B cell (primary cell): ENCODE measurements at regions of chr19 and their contacts with region 1.

Region 1: DNA sequence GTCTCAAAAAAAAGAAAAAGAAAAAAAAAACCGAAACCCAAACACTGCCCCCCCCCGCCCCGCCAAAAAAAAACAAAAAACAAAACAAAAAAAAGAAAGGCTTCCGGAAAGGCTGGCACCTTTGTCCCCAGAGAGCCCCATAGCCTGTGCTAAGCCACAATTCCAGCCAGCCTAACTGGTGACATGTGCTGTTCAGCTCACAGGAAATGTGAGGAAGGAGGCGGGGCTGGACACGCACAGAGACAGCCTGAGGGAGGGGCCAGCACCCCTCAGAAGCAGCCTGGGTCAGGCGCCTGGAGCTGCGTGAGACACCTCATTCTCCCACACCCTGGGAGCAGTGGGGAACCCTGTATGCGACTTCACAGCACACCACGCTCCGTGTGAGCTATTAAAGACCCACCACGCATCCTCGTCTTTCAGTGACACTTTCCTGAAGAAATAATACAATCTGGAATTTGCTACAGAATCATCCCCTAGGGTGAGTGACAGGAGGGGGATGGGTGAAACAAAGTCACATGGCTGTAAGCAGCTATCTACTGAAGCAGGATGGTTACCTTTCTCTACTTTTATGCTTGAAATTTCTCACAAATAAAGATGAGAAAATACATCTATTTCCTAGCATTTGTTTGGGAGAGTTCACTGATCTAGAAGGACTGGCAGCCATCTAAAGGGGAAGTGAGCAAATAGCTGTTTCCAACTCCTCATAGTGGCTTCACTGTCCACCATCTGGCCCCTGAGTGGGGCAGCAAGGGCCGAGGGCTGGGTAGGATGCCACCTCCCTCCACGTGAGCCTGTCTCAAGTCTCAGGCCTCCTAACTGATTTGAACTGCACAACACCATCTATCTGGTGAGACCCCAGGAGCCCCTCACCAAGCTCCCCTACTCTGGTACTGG is 12.3 kb upstream of the SLC35E1 start:
- DNase-seq: peak; percentile 98
- ATAC-seq: peak; percentile 53
- H3K4me3 ChIP-seq: peak overlapping the region; percentile 68 to 93 (median 85)
- H3K4me3 Mint-ChIP-seq: peak overlapping the region; percentile 97
- H3K27ac ChIP-seq: peak overlapping the region; percentile 98 to 99
- H3K27ac Mint-ChIP-seq: peak overlapping the region; percentile 100
- H3K4me1 ChIP-seq: peaks cover 62 to 80% of the 10 kb centered on the region in 2 donors
- H3K4me1 Mint-ChIP-seq: peaks cover 89% of the 10 kb centered on the region
- H3K27me3 ChIP-seq: no peaks in the 10 kb centered on the region
- H3K27me3 Mint-ChIP-seq: no peaks in the 10 kb centered on the region
- CTCF ChIP-seq: no peak

Region 2: GRCh38 chr19:16076154-16076957 is 508.1 kb before region 1 on chr19 and contains the start of gene TPM4:
- CTCF ChIA-PET with region 1: no interaction called
- POLR2A ChIA-PET with region 1: interaction called, 10 read pairs
- intact Hi-C with region 1: no loop called
- DNase-seq: peak; percentile 93
- ATAC-seq: peak; percentile 60
- H3K4me3 ChIP-seq: peak within 1 kb of the TSS; percentile 56 to 86 (median 73)
- H3K4me3 Mint-ChIP-seq: peak within 1 kb of the TSS; percentile 88
- H3K27ac ChIP-seq: peak within 1 kb of the TSS; percentile 91 to 92
- H3K27ac Mint-ChIP-seq: peak within 1 kb of the TSS; percentile 94
- H3K4me1 ChIP-seq: peaks cover 35 to 56% of the 10 kb centered on the region in 2 donors
- H3K4me1 Mint-ChIP-seq: peaks cover 60% of the 10 kb centered on the region
- H3K27me3 ChIP-seq: no peaks in the 10 kb centered on the region
- H3K27me3 Mint-ChIP-seq: no peaks in the 10 kb centered on the region
- CTCF ChIP-seq: no peak
- total RNA-seq, gene TPM4: 127 TPM in 2 replicates

Region 3: GRCh38 chr19:16259385-16260159 is 324.9 kb before region 1 on chr19:
- CTCF ChIA-PET with region 1: interaction called, 3 read pairs
- POLR2A ChIA-PET with region 1: interaction called, 4 read pairs
- intact Hi-C with region 1: loop called (anchors 5 kb)
- DNase-seq: peak; percentile 94
- ATAC-seq: peak; percentile 79
- H3K4me3 ChIP-seq: peak overlapping the region in 1 of 5 experiments; percentile 42
- H3K4me3 Mint-ChIP-seq: peak overlapping the region; percentile 78
- H3K27ac ChIP-seq: peak overlapping the region; percentile 87 to 89
- H3K27ac Mint-ChIP-seq: peak overlapping the region; percentile 95
- H3K4me1 ChIP-seq: peaks cover 75 to 94% of the 10 kb centered on the region in 2 donors
- H3K4me1 Mint-ChIP-seq: peaks cover 83% of the 10 kb centered on the region
- H3K27me3 ChIP-seq: no peaks in the 10 kb centered on the region
- H3K27me3 Mint-ChIP-seq: no peaks in the 10 kb centered on the region
- CTCF ChIP-seq: no peak

Region 4: DNA sequence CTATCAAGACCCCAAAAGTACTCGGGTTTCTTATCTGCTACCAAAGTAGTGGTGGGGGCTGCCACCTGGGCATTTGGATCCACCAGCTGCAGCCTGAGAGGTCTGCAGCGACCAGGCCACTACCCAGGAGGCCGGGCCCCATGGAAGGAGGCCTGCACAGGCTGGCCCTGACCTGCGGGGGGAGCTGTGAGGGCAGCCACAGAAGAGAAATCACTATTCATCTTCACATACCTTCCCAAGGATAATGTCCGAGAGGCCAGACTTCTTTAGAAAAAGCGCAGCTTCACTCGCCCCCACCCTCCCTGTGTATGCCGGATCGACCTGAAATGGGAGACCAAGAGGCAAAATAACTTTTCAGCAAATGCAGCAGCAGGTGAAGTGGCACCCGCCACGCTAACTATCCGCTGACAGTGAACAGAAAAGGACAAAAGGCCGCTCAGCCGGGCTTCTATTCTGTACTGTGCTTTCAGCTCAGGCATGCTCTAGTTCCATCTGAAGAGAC is 142.8 kb before region 1 on chr19:
- CTCF ChIA-PET with region 1: interaction called, 3 read pairs
- POLR2A ChIA-PET with region 1: interaction called, 19 read pairs
- intact Hi-C with region 1: loop called (anchors 1 kb)
- DNase-seq: no peak
- ATAC-seq: no peak
- H3K4me3 ChIP-seq: no peak overlapping the region
- H3K4me3 Mint-ChIP-seq: peak overlapping the region; percentile 16
- H3K27ac ChIP-seq: no peak overlapping the region
- H3K27ac Mint-ChIP-seq: peak overlapping the region; percentile 97
- H3K4me1 ChIP-seq: peaks cover 57 to 80% of the 10 kb centered on the region in 2 donors
- H3K4me1 Mint-ChIP-seq: peaks cover 77% of the 10 kb centered on the region
- H3K27me3 ChIP-seq: no peaks in the 10 kb centered on the region
- H3K27me3 Mint-ChIP-seq: no peaks in the 10 kb centered on the region
- CTCF ChIP-seq: peak; percentile 42

Region 5: DNA sequence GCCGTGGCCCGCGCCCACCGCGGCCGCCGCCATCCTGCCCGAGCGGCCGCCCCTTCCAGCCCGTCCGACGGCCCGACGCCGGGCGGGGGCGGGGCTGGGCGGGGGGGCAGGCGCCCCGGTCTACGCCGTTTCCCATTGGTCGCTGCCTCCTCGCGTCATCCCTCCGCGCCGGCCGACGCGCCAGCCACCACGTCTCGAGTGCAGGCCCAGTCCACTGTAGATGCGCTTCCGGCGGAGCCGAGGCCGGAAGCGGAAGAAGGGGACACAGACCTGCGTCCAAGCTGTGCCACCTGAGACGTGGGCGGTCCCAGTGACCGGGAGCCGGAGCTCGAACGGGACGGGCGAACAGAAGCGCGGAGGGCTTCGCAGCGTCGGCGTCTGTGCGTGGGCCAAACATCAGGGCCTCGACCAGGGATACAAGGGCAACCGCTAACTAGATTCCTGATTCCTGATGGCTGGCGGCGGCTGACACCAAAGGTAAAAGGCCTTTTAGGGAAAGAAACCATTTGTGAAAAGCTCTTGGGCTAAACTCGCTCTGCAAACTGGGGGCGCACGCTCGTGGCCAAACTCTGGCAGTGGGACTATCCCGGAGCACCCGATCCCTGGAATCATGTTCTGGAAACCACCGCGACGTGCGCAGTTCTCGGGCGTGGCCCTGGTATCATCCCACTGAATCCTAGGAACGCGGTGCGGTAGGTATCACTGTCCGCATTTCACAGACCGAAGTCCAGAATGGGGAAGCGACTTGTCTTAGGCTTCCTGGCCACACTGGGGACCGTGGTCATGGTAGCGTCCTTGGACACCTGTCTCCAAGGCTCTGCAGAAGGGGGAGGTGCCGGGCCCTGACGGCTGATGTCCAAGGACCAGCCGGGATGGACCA is 11.9 kb before region 1 on chr19 and contains the start of gene SLC35E1:
- CTCF ChIA-PET with region 1: interaction called, 26 read pairs
- POLR2A ChIA-PET with region 1: interaction called, 73 read pairs
- intact Hi-C with region 1: loop called (anchors 1 kb)
- DNase-seq: peak; percentile 94
- ATAC-seq: peak; percentile 92
- H3K4me3 ChIP-seq: peak within 1 kb of the TSS; percentile 75 to 97 (median 88)
- H3K4me3 Mint-ChIP-seq: peak within 1 kb of the TSS; percentile 98
- H3K27ac ChIP-seq: peak within 1 kb of the TSS; percentile 79 to 96
- H3K27ac Mint-ChIP-seq: peak within 1 kb of the TSS; percentile 98
- H3K4me1 ChIP-seq: peaks cover 27 to 39% of the 10 kb centered on the region in 2 donors
- H3K4me1 Mint-ChIP-seq: peaks cover 46% of the 10 kb centered on the region
- H3K27me3 ChIP-seq: no peaks in the 10 kb centered on the region
- H3K27me3 Mint-ChIP-seq: no peaks in the 10 kb centered on the region
- CTCF ChIP-seq: no peak
- total RNA-seq, gene SLC35E1: 46.8 and 51.6 TPM in 2 replicates

Region 6: GRCh38 chr19:16714702-16715287 is 130.3 kb after region 1 on chr19:
- CTCF ChIA-PET with region 1: interaction called, 3 read pairs
- POLR2A ChIA-PET with region 1: interaction called, 3 read pairs
- intact Hi-C with region 1: loop called (anchors 2 kb)
- DNase-seq: peak; percentile 77
- ATAC-seq: peak; percentile 19
- H3K4me3 ChIP-seq: no peak overlapping the region
- H3K4me3 Mint-ChIP-seq: peak overlapping the region; percentile 54
- H3K27ac ChIP-seq: peak overlapping the region in 1 of 2 donors; percentile 8
- H3K27ac Mint-ChIP-seq: peak overlapping the region; percentile 80
- H3K4me1 ChIP-seq: peaks cover 43 to 68% of the 10 kb centered on the region in 2 donors
- H3K4me1 Mint-ChIP-seq: peaks cover 42% of the 10 kb centered on the region
- H3K27me3 ChIP-seq: no peaks in the 10 kb centered on the region
- H3K27me3 Mint-ChIP-seq: no peaks in the 10 kb centered on the region
- CTCF ChIP-seq: peak; percentile 96

Region 7: GRCh38 chr19:17025991-17026658 is 441.6 kb after region 1 on chr19:
- CTCF ChIA-PET with region 1: no interaction called
- POLR2A ChIA-PET with region 1: no interaction called
- intact Hi-C with region 1: no loop called
- DNase-seq: peak; percentile 63
- ATAC-seq: peak; percentile 45
- H3K4me3 ChIP-seq: peak overlapping the region; percentile 27 to 67 (median 47)
- H3K4me3 Mint-ChIP-seq: peak overlapping the region; percentile 87
- H3K27ac ChIP-seq: no peak overlapping the region
- H3K27ac Mint-ChIP-seq: no peak overlapping the region
- H3K4me1 ChIP-seq: peaks cover 11 to 15% of the 10 kb centered on the region in 2 donors
- H3K4me1 Mint-ChIP-seq: peaks cover 13% of the 10 kb centered on the region
- H3K27me3 ChIP-seq: peaks cover 0 to 42% (median 14%) of the 10 kb centered on the region in 4 experiments
- H3K27me3 Mint-ChIP-seq: peaks cover 41% of the 10 kb centered on the region
- CTCF ChIP-seq: no peak